ENCODE measurements at regions of chr19 and their contacts with region 1.

Region 1: GRCh38 chr19:52258426-52258825 is 11.0 kb upstream of the ZNF766 start:
- DNase-seq: no peak
- ATAC-seq: no peak
- H3K4me3 ChIP-seq: no peak overlapping the region
- H3K27ac ChIP-seq: no peak overlapping the region
- H3K4me1 ChIP-seq: no peaks in the 10 kb centered on the region
- H3K27me3 ChIP-seq: no peaks in the 10 kb centered on the region
- CTCF ChIP-seq: no peak

Region 2: GRCh38 chr19:52171321-52172169 is 86.9 kb before region 1 on chr19 and contains the start of gene ZNF836:
- intact Hi-C with region 1: no loop called
- DNase-seq: peak; percentile 85 to 95 (median 92)
- ATAC-seq: peak; percentile 97 to 99 (median 98)
- H3K4me3 ChIP-seq: peak within 1 kb of the TSS; percentile 61 to 84 (median 76)
- H3K27ac ChIP-seq: peak within 1 kb of the TSS; percentile 44 to 74 (median 57)
- H3K4me1 ChIP-seq: peaks cover 0 to 7% (median 4%) of the 10 kb centered on the region in 3 donors
- H3K27me3 ChIP-seq: no peaks in the 10 kb centered on the region
- CTCF ChIP-seq: no peak
- total RNA-seq, gene ZNF836: 4.4 to 9.2 (median 7.3) TPM

Region 3: DNA sequence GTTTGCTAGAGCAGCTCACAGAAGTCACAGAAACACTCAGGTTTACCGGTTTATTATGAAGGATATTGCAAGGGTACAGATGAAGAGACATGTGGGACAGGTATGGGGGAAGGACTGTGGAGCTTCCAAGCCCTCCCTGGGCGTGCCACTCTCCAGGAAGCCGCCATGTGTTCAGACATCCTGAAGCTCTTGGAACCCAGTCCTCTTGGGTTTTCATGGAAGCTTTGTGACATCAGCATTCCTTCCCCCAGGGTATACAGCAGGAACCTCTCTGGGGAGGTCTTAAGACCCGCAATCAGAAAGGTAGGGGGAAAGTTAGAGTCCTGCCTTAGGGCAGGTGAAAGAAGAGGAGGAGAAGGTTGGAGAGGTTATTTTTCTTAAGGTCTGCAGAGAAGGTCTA is 27.0 kb after region 1 on chr19:
- intact Hi-C with region 1: no loop called
- DNase-seq: no peak
- ATAC-seq: no peak
- H3K4me3 ChIP-seq: no peak overlapping the region
- H3K27ac ChIP-seq: no peak overlapping the region
- H3K4me1 ChIP-seq: no peaks in the 10 kb centered on the region
- H3K27me3 ChIP-seq: no peaks in the 10 kb centered on the region
- CTCF ChIP-seq: no peak

Region 4: DNA sequence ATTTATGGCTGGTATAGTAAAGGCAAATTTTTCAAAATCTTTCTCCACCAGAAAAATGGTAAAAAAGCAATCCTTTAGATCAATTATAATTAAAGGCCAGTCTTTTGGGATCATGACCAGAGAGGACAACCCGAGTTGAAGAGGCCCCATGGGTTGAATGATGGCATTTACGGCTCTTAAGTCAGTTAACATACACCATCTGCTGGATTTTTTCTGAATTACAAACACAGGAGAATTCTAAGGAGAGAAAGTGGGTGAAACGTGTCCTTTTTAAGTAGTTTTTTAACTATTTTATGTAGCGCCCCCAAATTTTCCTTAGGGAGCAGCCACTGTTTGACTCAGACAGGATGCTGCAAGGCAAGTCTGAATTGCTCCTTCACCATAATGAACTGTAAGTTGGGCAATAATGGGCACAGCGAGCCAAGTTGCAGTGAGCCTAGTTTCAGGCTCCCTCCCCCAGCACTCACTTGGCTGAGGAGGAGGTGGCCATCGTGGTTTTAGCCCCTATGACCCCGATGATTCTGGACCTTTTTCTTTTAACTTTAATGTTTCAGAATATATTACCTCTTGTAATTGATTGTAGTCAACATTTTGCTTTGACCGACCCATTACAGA is 490.0 kb after region 1 on chr19:
- intact Hi-C with region 1: loop called in 1 of 3 experiments (anchors 10 kb)
- DNase-seq: no peak
- ATAC-seq: peak in 3 of 4 donors; percentile 69 to 73 (median 69)
- H3K4me3 ChIP-seq: no peak overlapping the region
- H3K27ac ChIP-seq: no peak overlapping the region
- H3K4me1 ChIP-seq: no peaks in the 10 kb centered on the region
- H3K27me3 ChIP-seq: no peaks in the 10 kb centered on the region
- CTCF ChIP-seq: peak in 1 of 4 donors; percentile 30